ENCODE measurements at regions of chr11 and their contacts with region 1.

Region 1: DNA sequence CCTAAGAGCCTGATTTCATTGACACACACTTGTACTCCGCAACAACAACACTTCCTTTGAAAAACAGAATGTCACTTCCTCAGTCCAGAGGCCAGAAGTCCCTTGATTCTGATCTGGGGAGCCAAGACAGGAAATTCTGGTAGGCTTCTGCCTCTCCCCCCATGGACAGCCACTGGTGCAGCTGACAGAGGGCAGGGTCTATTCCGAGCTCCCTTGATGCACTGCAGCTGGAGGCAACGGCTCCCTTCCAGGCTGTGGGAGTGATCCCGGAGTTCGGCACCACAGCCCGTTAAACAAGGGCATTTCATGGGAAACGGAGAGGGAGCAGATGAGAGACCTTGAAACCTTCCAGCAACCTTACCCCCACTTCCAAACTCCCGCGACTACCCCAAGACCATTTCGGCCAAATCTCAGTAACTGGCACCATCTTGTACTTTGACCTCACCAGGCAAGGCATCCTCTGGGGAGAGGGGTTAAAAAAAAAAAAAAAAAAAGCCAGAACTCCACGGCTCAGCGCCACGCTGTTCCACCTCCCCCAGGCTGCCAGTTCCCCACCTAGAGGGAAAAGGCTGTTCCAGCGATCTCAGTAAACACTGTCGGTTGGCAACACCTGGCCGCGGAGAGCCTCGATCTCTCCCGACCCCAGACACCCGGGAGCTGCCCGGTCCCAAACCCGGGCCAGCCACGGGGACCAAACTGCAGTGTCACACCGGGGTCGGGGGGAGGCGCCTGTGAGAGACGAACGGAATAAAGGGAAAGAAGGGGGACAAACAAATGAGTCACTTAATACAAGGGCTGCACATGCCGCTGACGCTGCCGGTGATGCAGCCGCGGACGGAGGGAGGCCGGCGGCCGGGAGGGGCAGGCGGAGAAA is 1.1 kb downstream of the GAB2 start:
- DNase-seq: peak; percentile 84 to 90 (median 87)
- H3K4me3 ChIP-seq: peak overlapping the region; percentile 89
- H3K27ac ChIP-seq: peak overlapping the region; percentile 96 to 99
- H3K4me1 ChIP-seq: peaks cover 14% of the 10 kb centered on the region
- H3K27me3 ChIP-seq: no peaks in the 10 kb centered on the region
- CTCF ChIP-seq: peak in 2 of 3 donors; percentile 43 to 64
- EP300 ChIP-seq: no peak
- POLR2A ChIP-seq: peak; percentile 80

Region 2: GRCh38 chr11:78139422-78140391 is 276.8 kb before region 1 on chr11 and contains the start of gene ALG8:
- intact Hi-C with region 1: loop called in 1 of 4 experiments (anchors 10 kb)
- DNase-seq: peak; percentile 93 to 98 (median 96)
- H3K4me3 ChIP-seq: peak within 1 kb of the TSS; percentile 64
- H3K27ac ChIP-seq: no peak within 1 kb of the TSS
- H3K4me1 ChIP-seq: peaks cover 5% of the 10 kb centered on the region
- H3K27me3 ChIP-seq: no peaks in the 10 kb centered on the region
- CTCF ChIP-seq: no peak
- EP300 ChIP-seq: no peak
- POLR2A ChIP-seq: peak; percentile 47
- total RNA-seq, gene ALG8: 22.6 to 40.7 (median 28.5) TPM

Region 3: DNA sequence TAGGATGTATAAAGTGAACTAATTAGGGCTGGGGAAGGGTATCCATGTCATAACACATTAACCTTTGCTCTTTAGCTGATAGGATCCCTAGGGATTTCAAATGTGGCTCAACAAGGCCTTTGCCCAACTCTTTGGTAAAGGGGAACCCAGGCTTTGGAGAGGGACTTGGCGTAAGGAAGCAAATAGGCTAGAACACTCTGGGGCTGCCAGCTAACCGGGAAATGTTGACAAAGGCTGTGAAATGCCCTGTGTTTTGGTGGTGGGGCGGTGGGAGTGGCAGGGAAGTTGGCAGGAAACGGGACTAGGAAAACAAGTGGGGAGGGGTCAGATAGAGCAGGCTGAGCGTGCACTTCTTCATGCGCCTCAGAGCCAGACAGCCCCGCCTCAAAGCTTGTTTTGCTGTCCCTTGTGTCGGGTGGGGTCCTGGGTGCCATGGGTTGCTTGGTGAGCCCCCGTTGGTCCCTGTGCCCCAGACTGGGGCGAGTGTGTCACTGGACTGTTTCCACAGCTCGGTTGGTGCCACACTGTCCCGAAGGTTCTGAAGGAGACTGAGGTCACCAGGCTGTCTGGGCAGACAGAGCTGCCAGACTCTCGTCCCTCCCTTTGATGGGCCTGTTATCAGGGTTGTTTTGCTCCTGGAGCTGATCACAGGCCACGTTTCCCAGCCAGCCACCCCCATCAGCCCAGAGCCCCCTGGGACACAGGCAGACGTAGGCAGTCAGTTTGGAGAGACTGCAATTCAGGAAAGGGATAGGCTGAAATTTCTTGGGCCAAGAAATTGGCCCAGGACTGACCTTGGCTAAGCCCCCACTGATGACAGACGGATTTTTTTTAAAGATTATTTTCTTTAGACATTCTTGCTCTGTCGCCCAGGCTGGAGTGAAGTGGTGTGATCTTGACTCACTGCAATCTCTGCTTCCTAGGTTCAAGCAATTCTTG is 247.7 kb before region 1 on chr11:
- intact Hi-C with region 1: loop called in 2 of 4 experiments (anchors 10 kb)
- DNase-seq: peak; percentile 79 to 89 (median 85)
- H3K4me3 ChIP-seq: no peak overlapping the region
- H3K27ac ChIP-seq: peak overlapping the region; percentile 26 to 75
- H3K4me1 ChIP-seq: peaks cover 35% of the 10 kb centered on the region
- H3K27me3 ChIP-seq: no peaks in the 10 kb centered on the region
- CTCF ChIP-seq: no peak
- EP300 ChIP-seq: peak; percentile 6
- POLR2A ChIP-seq: no peak

Region 4: DNA sequence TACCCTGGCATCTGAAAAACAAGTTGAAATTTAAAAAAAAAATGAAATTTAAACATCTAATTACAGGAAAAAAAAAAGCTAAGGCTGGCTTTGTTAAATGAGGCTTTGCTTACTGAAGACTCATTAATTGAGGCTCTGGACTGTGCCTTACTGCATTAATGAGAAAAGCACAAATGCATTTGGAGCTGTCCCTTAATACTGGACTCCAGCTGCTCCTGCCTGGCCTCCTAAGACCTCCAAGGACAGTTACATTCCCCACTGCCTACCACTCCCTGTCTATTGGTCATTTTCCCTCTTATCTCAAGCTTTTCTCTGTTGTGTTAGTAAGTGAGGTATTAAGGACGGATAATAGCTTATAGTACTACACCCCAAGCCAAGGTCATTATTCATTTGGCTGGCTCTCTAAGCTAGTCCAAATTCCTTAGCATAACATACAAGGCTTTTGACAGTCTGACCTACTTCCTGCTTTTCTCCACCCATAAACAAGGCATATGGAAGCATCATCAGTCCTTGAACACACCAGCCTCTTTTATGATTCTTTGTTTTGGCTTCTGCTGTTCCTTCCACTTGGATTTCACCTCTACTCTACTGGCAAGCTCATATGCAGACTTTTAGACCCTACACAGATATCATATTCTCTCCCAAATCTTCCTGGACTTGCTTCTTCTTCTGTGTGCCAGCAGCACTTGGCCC is 165.3 kb before region 1 on chr11:
- intact Hi-C with region 1: loop called in 2 of 4 experiments (anchors 5 to 10 kb)
- DNase-seq: no peak
- H3K4me3 ChIP-seq: no peak overlapping the region
- H3K27ac ChIP-seq: peak overlapping the region in 1 of 2 donors; percentile 65
- H3K4me1 ChIP-seq: peaks cover 34% of the 10 kb centered on the region
- H3K27me3 ChIP-seq: no peaks in the 10 kb centered on the region
- CTCF ChIP-seq: no peak
- EP300 ChIP-seq: no peak
- POLR2A ChIP-seq: no peak

Region 5: DNA sequence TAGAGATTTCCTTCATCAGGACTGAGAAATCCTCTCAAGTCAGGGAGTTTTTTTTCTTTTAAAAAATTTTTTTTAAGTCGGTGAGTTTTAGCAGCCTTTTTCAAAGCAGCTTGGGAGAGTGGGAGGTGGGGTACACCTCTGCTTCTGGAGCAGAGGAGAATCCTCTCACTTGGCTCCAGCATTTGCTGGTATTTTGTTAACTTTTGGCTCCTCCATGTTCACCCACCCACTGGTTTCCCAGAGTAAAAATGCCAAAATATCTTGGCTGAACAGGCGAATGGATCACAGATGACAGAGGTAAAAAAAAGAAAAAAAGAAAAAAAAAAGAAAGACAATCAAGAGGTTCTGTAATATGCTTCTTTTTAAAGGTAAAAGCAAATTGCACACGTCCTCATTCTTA is 66.9 kb before region 1 on chr11:
- intact Hi-C with region 1: loop called in 1 of 4 experiments (anchors 10 kb)
- DNase-seq: no peak
- H3K4me3 ChIP-seq: no peak overlapping the region
- H3K27ac ChIP-seq: peak overlapping the region in 1 of 2 donors; percentile 62
- H3K4me1 ChIP-seq: peaks cover 24% of the 10 kb centered on the region
- H3K27me3 ChIP-seq: no peaks in the 10 kb centered on the region
- CTCF ChIP-seq: no peak
- EP300 ChIP-seq: no peak
- POLR2A ChIP-seq: no peak

Region 6: DNA sequence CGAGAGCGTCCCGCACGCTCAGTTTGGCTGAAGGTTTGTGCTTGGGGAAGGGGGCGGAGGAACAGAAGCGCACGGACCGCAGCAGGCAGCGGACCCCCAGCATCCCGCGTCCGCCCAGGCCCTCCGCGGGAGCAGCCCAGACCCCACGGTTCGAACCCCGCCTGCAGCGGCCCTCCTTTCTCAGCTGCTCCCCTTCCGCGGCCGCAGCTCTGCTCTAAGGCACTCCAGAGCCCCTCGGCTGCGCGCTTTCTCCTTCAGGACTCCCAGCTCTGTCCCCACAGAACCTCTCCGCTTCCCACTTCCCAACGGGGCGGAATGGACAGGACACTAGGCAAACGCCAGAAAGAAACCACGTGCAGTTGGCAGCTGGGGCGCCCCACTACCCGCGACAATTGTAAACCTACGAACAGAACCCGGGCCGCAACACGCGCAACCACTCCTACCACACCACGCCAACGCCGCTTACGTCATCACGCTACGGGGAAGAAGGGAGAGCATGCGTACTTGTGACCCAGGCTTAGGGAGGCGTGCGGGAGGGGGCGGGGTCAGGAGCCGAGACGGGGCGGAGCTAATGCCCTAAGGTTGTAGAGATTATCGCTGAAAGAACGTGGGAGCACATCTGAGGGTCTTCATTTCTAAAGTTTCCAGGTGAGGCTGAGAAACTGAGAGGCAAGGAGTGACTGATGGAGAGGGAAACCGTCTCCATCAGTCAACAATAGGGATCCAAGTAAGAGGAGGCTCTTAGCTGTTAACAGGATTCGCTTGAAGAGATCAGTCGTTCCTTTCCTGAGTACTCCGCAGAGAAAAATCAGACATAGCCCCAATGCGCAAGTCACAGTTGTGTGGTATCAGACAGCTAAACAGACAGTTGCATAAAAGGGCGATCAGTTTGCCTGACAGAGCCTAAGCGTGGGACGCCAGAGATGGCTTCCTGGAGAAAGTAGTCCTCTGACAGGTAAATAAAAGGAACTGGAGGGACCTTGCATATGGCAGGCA is 158.1 kb after region 1 on chr11 and contains the start of gene NARS2:
- intact Hi-C with region 1: loop called in 3 of 4 experiments (anchors 10 kb)
- DNase-seq: peak; percentile 97 to 98 (median 98)
- H3K4me3 ChIP-seq: peak within 1 kb of the TSS; percentile 51
- H3K27ac ChIP-seq: peak within 1 kb of the TSS; percentile 55 to 83
- H3K4me1 ChIP-seq: peaks cover 6% of the 10 kb centered on the region
- H3K27me3 ChIP-seq: no peaks in the 10 kb centered on the region
- CTCF ChIP-seq: peak in 1 of 3 donors; percentile 8
- EP300 ChIP-seq: no peak
- POLR2A ChIP-seq: peak; percentile 97
- total RNA-seq, gene NARS2: 13.2 to 24.5 (median 17.3) TPM